ENCODE measurements at regions of chr1 and their contacts with region 1.

Region 1: GRCh38 chr1:59156526-59157199 is 140.2 kb upstream of the FGGY start:
- DNase-seq: no peak
- ATAC-seq: peak in 4 of 8 donors; percentile 23 to 61 (median 42)
- H3K4me3 ChIP-seq: peak overlapping the region in 1 of 10 donors; percentile 29
- H3K27ac ChIP-seq: peak overlapping the region in 3 of 10 donors; percentile 2 to 35 (median 29)
- H3K4me1 ChIP-seq: peaks cover 6 to 27% (median 24%) of the 10 kb centered on the region in 9 donors
- H3K27me3 ChIP-seq: no peaks in the 10 kb centered on the region
- CTCF ChIP-seq: no peak

Region 2: DNA sequence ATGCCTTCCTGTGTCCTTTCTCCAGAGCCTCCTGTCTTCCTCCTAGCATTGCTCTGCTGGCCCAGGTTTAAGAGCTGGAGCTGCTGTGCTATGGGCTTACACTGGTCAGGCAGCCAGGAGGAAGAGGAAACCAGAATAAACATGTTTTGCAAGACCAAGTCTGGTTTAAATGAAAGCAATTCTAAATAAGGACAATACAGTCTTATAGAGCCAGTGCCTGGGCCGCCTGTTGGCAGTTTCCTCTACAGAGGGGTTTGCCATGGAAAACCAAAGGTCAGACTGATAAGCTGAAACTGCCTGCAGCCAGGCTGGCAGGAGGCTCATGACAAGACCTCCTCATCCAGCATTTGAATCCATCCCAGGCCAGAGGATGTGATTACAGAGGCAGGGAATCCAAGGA is 47.3 kb after region 1 on chr1:
- intact Hi-C with region 1: loop called in 1 of 10 experiments (anchors 5 kb)
- DNase-seq: peak; percentile 20 to 60
- ATAC-seq: peak; percentile 73 to 97 (median 89)
- H3K4me3 ChIP-seq: no peak overlapping the region
- H3K27ac ChIP-seq: peak overlapping the region in 9 of 10 donors; percentile 20 to 80 (median 45)
- H3K4me1 ChIP-seq: peaks cover 0 to 22% (median 13%) of the 10 kb centered on the region in 9 donors
- H3K27me3 ChIP-seq: no peaks in the 10 kb centered on the region
- CTCF ChIP-seq: peak in 1 of 9 donors; percentile 12

Measured in heart right ventricle (tissue), 16 donors.